Lower lobe of right lung (tissue), 2 donors: ENCODE measurements at regions of chr6 and their contacts with region 1.

Region 1: DNA sequence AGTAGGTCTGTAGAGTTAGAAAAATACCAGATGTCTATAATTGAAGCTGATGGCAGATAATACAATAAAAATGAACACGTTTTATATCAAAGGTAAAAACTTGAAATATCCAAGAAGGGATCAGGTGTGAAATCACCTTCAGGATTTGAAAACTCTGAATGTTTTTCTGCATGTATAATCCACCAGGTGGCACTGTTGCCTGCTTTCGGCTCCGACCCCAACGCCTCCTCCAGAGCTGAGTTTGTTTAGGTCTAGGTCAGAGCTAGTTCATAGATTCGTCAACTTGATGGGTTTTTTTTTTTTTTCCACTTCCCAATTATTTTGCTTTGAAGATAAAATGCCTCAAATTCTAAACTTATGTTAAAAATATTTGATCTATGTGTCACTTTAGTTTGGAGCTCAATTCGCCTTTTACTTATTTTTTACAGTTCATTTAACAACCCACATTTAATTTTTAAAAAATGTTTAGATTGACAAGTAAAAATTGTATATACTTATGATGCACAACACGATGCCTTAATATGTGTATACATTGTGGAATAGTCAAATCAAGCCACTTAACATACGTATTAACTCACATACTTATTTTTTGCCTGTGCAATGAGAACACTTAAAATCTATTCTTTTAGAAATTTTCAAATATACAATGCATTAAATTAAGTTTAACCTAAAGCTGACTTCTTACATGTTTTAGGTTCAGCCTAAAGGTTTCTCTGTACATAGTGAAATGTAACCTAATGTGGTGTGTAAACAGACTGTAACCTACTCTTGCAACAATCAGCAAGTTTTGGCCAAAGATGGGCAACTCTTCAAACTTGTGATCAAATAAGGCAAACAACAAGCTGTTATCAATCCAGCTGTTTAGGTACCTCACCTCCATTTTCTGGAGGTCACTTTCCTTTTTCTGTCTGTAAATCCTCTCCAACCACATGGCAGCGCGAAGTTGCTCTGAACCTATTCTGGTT is 39.4 kb upstream of the ENPP4 start:
- DNase-seq: peak; percentile 68
- ATAC-seq: peak; percentile 85 to 87
- H3K4me3 ChIP-seq: no peak overlapping the region
- H3K27ac ChIP-seq: no peak overlapping the region
- H3K4me1 ChIP-seq: peaks cover 10% of the 10 kb centered on the region
- H3K27me3 ChIP-seq: no peaks in the 10 kb centered on the region
- CTCF ChIP-seq: peak; percentile 86

Region 2: GRCh38 chr6:45922728-45923351 is 167.6 kb before region 1 on chr6:
- intact Hi-C with region 1: no loop called
- DNase-seq: peak; percentile 66
- ATAC-seq: peak; percentile 61 to 80
- H3K4me3 ChIP-seq: no peak overlapping the region
- H3K27ac ChIP-seq: no peak overlapping the region
- H3K4me1 ChIP-seq: peaks cover 11% of the 10 kb centered on the region
- H3K27me3 ChIP-seq: no peaks in the 10 kb centered on the region
- CTCF ChIP-seq: peak; percentile 58

Region 3: DNA sequence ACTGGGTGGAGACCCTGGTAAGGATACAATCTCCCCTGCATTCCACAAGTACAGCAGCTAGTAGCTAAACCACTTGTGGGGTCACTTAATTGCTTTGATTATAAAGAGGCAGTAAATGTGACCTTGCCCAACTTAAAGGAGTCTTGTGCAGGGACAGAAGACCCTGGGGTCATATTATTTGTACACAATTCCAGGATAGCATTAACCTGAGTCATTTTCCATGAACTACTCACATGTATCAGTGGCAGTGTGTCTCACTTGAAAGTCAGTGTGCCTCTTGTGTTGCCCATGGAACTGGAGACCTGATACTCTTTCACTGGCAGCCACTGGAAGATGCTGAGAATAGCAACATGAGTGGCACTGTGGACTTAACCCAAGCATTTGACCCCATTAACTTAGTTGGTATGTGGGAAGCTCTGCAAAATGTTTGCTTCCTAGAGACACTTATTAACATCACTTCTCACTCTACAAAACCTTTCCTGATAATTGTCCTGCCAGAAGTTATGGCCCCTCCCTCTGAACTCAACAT is 103.6 kb before region 1 on chr6:
- intact Hi-C with region 1: no loop called
- DNase-seq: no peak
- ATAC-seq: peak in 1 of 2 donors; percentile 11
- H3K4me3 ChIP-seq: no peak overlapping the region
- H3K27ac ChIP-seq: no peak overlapping the region
- H3K4me1 ChIP-seq: peaks cover 6% of the 10 kb centered on the region
- H3K27me3 ChIP-seq: no peaks in the 10 kb centered on the region
- CTCF ChIP-seq: no peak

Region 4: DNA sequence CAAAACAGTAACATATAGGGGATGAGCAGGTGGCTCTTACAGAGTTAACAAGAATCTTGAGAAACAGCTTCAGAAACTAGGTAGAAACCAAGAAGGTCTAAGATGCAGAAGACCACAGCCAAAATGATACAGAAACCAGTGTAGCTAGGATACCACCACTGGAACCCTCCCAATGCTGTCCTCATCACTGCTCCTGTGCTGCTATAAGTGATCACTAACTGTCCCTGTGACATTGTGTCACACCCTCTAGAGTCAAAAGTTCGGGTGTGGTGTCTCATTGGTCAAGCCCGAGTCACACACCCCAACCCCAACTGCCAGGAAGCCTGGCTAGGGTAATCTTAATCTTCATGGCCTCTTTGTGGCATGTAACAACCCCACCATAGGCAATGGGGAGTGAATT is 247.7 kb after region 1 on chr6:
- intact Hi-C with region 1: no loop called
- DNase-seq: no peak
- ATAC-seq: no peak
- H3K4me3 ChIP-seq: no peak overlapping the region
- H3K27ac ChIP-seq: no peak overlapping the region
- H3K4me1 ChIP-seq: no peaks in the 10 kb centered on the region
- H3K27me3 ChIP-seq: no peaks in the 10 kb centered on the region
- CTCF ChIP-seq: no peak

Region 5: DNA sequence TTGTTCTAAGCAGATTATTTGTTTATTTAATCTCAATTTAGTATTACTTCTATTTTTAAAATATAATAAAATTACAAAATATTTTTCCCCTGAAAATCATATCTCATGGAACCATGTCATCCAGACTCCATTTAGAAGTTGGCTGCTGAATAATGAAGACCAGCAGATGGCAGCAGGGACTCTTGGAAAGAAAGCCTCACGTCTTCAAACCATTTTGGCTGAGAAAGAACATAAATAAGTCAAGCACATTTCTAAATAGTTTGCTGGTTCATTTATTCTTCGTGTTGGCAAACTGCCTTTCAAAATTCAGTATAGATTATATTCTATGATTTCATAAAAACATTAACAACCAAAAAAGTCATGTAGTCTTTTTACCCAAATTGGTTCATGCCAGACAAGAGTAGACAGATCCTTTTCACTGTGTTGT is 329.2 kb after region 1 on chr6:
- intact Hi-C with region 1: loop called (anchors 10 kb)
- DNase-seq: no peak
- ATAC-seq: peak; percentile 58 to 69
- H3K4me3 ChIP-seq: no peak overlapping the region
- H3K27ac ChIP-seq: no peak overlapping the region
- H3K4me1 ChIP-seq: peaks cover 17% of the 10 kb centered on the region
- H3K27me3 ChIP-seq: no peaks in the 10 kb centered on the region
- CTCF ChIP-seq: peak; percentile 84